Activated T-helper 1 cell treated with anti-CD3 and anti-CD28 coated beads, Interleukin-12 subunit alpha, Interleukin-12 subunit beta, Interleukin-2, Interleukin-4 antibody, amounts not matched to agents 30 ng/mL and 10 ng/mL and 1 ng/mL, durations not matched to agents 14 hours and 24 hours and 36 hours (primary cell): ENCODE measurements at regions of chr4 and their contacts with region 1.

Region 1: GRCh38 chr4:781493-782216 is 44.3 kb downstream of the CPLX1 start:
- DNase-seq: peak; percentile 100
- H3K4me3 Mint-ChIP-seq: peak overlapping the region; percentile 88
- H3K27ac Mint-ChIP-seq: peak overlapping the region; percentile 90
- H3K4me1 Mint-ChIP-seq: peaks cover 37% of the 10 kb centered on the region
- H3K27me3 Mint-ChIP-seq: peaks cover 9% of the 10 kb centered on the region

Region 2: GRCh38 chr4:473570-474457 is 307.8 kb before region 1 on chr4:
- intact Hi-C with region 1: loop called (anchors 1 kb)
- DNase-seq: peak; percentile 94
- H3K4me3 Mint-ChIP-seq: peak overlapping the region; percentile 99
- H3K27ac Mint-ChIP-seq: peak overlapping the region; percentile 95
- H3K4me1 Mint-ChIP-seq: peaks cover 26% of the 10 kb centered on the region
- H3K27me3 Mint-ChIP-seq: no peaks in the 10 kb centered on the region

Region 3: DNA sequence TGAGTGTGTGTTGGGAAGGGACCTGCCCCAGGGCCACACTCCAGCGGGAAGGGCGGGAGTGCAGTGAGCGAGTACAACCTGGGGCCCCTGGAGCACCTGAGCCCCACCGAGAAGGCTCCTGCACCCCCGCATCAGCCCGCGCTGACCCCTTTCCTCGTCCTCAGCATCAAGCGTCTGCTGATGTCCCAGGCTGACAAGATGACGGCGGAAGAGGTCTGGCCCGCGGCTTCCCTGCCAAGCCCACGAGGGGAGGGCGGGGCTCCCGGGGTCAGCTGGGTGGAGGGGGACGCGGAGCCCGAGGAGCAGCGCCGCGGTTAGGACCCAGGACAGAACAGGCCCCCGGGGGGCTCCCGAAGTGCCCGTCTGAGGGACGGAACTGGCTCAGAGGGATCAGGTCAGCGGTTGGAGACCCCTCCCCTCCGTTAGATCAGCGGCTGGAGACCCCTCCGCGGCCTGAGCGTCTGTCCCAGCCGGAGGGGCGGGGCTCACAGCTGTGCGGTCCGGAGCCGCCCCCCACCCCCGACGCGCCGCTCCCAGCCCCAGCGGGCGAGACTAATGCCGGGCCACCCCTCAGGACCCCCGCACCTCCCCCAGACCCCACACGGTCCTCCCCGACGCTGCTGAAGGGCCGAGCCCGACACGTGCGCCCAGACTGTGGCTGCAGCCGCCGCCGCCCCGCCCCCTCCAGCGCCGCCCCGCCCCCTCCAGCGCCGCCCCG is 100.6 kb before region 1 on chr4:
- intact Hi-C with region 1: loop called (anchors 2 kb)
- DNase-seq: peak; percentile 48
- H3K4me3 Mint-ChIP-seq: peak overlapping the region; percentile 68
- H3K27ac Mint-ChIP-seq: no peak overlapping the region
- H3K4me1 Mint-ChIP-seq: no peaks in the 10 kb centered on the region
- H3K27me3 Mint-ChIP-seq: no peaks in the 10 kb centered on the region

Region 4: DNA sequence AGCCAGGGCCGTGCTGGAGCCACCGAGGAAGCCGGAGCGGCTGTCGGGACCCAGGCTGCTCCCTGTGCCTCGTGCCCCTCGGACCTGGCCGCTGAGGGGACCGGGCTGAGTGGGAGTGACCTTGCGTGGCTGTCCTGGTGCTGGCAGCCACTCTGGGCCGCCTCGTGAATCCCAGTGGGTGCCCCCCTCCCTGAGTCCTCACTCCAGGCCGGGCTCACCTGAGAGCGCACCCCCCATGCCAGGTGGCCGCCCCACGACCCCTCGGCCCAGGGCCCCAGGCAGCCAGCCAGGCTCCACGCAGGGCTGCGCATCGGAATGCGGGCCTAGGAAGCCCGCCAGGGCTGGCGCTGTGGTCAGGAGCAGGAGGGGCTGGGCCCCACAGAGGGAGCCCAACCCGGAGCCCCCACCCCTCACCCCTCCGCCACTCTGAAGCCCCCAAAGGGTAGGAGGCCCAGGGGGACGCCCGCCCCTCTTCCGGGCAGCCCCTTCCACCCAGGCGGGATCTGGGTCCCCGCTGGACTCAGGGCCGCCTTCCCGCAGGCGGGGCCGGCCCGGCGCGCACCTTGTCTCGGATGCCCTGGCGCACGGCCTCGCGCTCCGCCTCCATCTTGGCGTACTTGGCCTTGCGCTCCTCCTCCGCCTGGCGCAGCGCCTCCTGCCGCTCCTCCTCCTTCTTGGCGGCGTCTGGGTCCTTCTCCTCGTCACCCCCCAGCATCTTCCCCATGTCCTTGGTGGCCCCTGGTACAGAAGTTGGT is 10.4 kb after region 1 on chr4:
- intact Hi-C with region 1: loop called (anchors 1 kb)
- DNase-seq: peak; percentile 46
- H3K4me3 Mint-ChIP-seq: peak overlapping the region; percentile 78
- H3K27ac Mint-ChIP-seq: no peak overlapping the region
- H3K4me1 Mint-ChIP-seq: peaks cover 15% of the 10 kb centered on the region
- H3K27me3 Mint-ChIP-seq: peaks cover 47% of the 10 kb centered on the region

Region 5: DNA sequence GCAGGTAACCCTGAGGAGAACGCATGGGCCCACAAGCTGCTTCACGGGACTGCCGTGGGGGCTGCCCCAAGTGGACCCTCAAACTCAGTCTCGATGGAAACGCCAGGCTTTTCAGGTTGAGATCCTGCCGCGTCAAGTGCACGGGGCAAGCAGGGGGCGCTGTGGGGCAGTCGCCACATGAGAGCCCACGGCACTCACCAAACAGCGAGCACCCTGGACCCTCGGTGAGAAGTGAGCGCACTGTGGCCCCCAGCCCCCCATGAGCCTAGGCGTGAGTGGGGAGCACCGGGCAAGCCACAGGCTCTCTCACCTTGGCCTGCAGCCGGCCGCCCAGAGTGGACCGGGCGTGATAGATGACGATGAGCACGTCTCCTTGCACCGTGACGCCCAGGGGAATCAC is 95.1 kb after region 1 on chr4:
- intact Hi-C with region 1: loop called (anchors 1 kb)
- DNase-seq: no peak
- H3K4me3 Mint-ChIP-seq: no peak overlapping the region
- H3K27ac Mint-ChIP-seq: peak overlapping the region; percentile 81
- H3K4me1 Mint-ChIP-seq: peaks cover 41% of the 10 kb centered on the region
- H3K27me3 Mint-ChIP-seq: no peaks in the 10 kb centered on the region

Region 6: GRCh38 chr4:973431-974397 is 192.1 kb after region 1 on chr4 and contains the start of gene DGKQ:
- intact Hi-C with region 1: loop called (anchors 1 kb)
- DNase-seq: peak; percentile 80
- H3K4me3 Mint-ChIP-seq: peak within 1 kb of the TSS; percentile 51
- H3K27ac Mint-ChIP-seq: no peak within 1 kb of the TSS
- H3K4me1 Mint-ChIP-seq: no peaks in the 10 kb centered on the region
- H3K27me3 Mint-ChIP-seq: no peaks in the 10 kb centered on the region
- total RNA-seq, gene DGKQ: 17.8 and 18.0 TPM in 2 replicates

Region 7: DNA sequence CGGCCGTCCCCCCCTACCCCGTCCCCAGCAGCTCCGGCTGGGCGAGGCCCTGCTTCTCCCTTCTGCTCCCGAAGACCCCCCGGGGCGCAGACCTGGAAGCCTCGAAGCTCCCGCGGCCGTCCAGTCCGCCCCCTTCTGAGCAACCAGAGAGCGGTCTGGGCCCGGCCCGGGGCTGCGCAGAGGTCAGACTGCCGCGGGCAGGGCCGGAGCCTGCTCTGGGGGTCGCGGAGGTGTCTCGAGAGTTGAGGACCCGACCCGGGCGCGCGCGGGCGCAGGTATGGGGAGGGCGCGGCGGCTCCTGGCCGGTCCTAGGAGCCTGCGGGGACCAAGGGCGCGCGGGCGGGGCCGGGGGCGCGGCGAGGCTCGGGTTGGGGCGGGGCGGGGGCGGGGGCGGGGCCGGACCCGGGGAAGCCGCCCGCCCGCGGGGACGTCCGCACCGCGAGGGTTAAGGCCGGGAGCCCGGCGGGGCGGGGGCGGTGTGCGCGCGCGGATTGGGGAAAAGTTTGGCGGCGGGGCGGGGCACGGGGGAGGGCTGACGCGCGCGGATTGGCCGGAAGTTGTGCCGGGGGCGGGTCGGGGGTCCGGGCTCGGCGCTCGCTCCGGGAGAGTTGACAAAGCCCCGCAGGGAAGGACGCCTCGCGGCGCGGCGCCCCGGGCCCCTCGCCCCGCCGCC is 229.5 kb after region 1 on chr4 and contains the start of gene FGFRL1:
- intact Hi-C with region 1: loop called (anchors 1 kb)
- DNase-seq: peak; percentile 89
- H3K4me3 Mint-ChIP-seq: peak within 1 kb of the TSS; percentile 86
- H3K27ac Mint-ChIP-seq: peak within 1 kb of the TSS; percentile 89
- H3K4me1 Mint-ChIP-seq: peaks cover 15% of the 10 kb centered on the region
- H3K27me3 Mint-ChIP-seq: peaks cover 28% of the 10 kb centered on the region
- total RNA-seq, gene FGFRL1: 15.5 TPM in 2 replicates